Activated T-helper 1 cell treated with anti-CD3 and anti-CD28 coated beads, Interleukin-12 subunit alpha, Interleukin-12 subunit beta, Interleukin-2, Interleukin-4 antibody, amounts not matched to agents 30 ng/mL and 10 ng/mL and 1 ng/mL, durations not matched to agents 14 hours and 24 hours and 36 hours (primary cell): ENCODE measurements at regions of chr7 and their contacts with region 1.

Region 1: DNA sequence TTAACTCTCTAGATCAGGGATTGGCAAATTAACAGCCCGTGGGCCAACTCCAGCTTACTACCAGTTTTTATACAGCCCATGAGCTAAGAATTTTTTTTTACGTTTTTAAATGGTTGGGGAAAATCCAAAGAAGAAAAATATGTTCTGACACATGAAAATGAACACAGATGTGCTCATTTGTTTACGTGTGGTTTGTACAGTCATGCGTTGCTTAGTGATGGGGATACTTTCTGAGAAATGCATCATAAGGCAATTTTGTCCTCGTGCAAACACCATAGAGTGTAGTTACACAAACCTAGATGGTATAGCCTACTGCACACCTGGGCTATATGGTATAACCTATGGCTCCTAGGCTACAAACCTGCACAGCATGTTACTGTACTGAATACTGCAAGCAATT is 8.3 kb upstream of the SMKR1 start:
- DNase-seq: peak; percentile 24
- H3K4me3 Mint-ChIP-seq: no peak overlapping the region
- H3K27ac Mint-ChIP-seq: peak overlapping the region; percentile 85
- H3K4me1 Mint-ChIP-seq: peaks cover 29% of the 10 kb centered on the region
- H3K27me3 Mint-ChIP-seq: no peaks in the 10 kb centered on the region

Region 2: GRCh38 chr7:129530795-129531391 is 36.9 kb after region 1 on chr7:
- intact Hi-C with region 1: loop called (anchors 1 kb)
- DNase-seq: peak; percentile 8
- H3K4me3 Mint-ChIP-seq: no peak overlapping the region
- H3K27ac Mint-ChIP-seq: peak overlapping the region; percentile 79
- H3K4me1 Mint-ChIP-seq: peaks cover 12% of the 10 kb centered on the region
- H3K27me3 Mint-ChIP-seq: no peaks in the 10 kb centered on the region

Region 3: GRCh38 chr7:129635300-129636029 is 141.4 kb after region 1 on chr7:
- intact Hi-C with region 1: loop called (anchors 1 kb)
- DNase-seq: peak; percentile 51
- H3K4me3 Mint-ChIP-seq: no peak overlapping the region
- H3K27ac Mint-ChIP-seq: no peak overlapping the region
- H3K4me1 Mint-ChIP-seq: peaks cover 23% of the 10 kb centered on the region
- H3K27me3 Mint-ChIP-seq: no peaks in the 10 kb centered on the region